IMR-90 (cell line): ENCODE measurements at regions of chr16 and their contacts with region 1.

Region 1: DNA sequence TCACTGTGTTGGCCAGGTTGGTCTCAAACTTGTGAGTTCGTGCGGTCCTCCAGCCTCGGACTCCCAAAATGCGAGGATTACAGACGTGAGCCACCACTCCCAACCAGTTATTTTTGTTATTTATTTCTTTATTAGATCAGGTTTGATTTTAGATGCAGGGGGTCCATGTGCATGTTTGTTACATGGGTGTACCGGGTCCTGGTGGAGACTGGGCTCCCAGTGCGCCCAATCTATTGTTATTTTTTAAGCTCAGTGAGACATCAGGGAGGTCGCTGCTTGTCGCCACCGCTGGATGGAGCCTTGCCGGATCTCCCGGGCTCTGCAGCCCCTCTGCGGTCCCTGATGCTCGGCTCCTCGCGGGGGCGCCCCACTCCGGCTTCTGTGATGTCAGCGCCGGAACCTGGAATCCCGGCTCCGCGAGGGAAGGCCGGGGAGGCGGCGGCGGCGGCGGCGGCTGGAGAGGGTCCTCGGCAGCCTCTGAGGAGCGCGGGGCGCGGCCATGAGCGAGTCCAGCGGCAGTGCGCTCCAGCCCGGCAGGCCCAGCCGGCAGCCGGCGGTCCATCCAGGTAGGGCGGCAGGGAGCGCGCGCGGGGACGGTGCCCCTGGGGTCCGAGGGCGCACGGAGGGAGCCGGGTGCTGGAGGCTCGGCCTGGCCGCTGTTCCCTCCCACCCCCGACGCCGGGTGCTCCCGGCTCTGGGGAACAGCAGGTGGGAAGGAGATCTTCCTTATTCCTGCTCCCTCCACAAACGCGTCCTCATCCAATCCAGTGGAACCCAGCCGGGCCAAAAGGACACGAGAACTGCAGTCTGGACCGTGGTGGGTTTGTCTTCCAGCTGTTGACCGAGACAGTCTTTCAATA is at the start of gene TMC7:
- DNase-seq: peak; percentile 79
- ATAC-seq: peak; percentile 99
- H3K4me3 ChIP-seq: peak within 1 kb of the TSS; percentile 66
- H3K27ac ChIP-seq: no peak within 1 kb of the TSS; the same call in 1 of the 2 replicates
- H3K4me1 ChIP-seq: peaks cover 2% of the 10 kb centered on the region; the same call in 1 of the 2 replicates
- H3K27me3 ChIP-seq: no peaks in the 10 kb centered on the region; the same call in 1 of the 2 replicates
- CTCF ChIP-seq: peak; percentile 97
- POLR2A ChIP-seq: 0 out of 2 replicates have a peak, but pooled peaks have one; percentile 29
- RAD21 ChIP-seq: peak; percentile 82
- total RNA-seq, gene TMC7: 0.28 and 0.36 TPM in 2 replicates

Region 2: GRCh38 chr16:18853694-18854093 is 130.1 kb before region 1 on chr16:
- CTCF ChIA-PET with region 1: no interaction called
- POLR2A ChIA-PET with region 1: interaction called, 14 read pairs
- dilution Hi-C with region 1: no loop called
- in situ Hi-C with region 1: no loop called
- intact Hi-C with region 1: no loop called
- DNase-seq: no peak
- ATAC-seq: no peak
- H3K4me3 ChIP-seq: no peak overlapping the region
- H3K27ac ChIP-seq: no peak overlapping the region
- H3K4me1 ChIP-seq: no peaks in the 10 kb centered on the region
- H3K27me3 ChIP-seq: no peaks in the 10 kb centered on the region
- CTCF ChIP-seq: no peak
- POLR2A ChIP-seq: no peak
- RAD21 ChIP-seq: no peak

Region 3: DNA sequence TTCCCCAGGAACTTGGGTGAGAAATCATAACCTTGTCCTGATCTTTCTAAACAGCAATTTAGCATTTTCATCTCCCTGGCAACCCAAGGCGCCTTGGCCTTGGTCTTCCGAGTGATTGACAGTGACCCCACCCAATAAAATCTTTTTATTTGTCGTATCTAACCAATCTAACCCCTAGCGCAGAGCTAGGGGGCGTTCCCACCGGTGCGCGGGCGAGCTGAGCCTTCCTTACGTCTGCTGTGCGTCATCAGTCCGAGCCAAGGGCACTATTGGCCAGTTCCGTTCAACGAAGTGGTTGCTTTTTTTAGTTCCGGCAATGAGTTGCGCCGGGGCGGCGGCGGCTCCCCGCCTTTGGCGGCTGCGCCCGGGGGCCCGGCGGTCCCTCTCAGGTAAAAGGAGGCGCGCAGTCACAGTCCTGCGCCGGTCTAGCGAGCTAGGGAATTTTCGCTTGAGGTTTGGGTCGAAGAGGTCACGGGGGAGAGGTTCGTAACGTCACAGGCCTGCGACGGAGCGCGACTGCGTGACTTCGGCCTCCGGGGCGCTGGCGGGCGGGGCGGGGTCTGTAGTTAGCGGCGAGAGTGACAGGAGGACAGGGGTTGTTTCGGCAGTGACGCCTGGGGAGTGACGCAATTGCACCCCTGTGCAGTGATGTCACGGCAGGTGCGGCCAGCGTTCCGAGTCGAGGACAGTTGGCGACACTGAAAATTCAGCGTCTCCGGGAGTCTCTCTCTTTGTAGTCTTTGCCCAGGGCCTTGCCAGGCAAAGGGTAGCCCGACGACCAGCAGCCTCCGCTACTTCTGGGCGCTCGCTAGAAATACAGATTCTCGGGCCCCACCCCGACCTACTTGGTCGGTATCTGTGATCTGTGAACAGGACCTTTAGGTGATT is 83.8 kb after region 1 on chr16 and contains the start of gene COQ7:
- CTCF ChIA-PET with region 1: interaction called, 5 read pairs
- POLR2A ChIA-PET with region 1: no interaction called
- dilution Hi-C with region 1: no loop called
- in situ Hi-C with region 1: loop called (anchors 5 kb)
- intact Hi-C with region 1: loop called (anchors 1 kb)
- DNase-seq: peak; percentile 100
- ATAC-seq: peak; percentile 98
- H3K4me3 ChIP-seq: peak within 1 kb of the TSS; percentile 64
- H3K27ac ChIP-seq: peak within 1 kb of the TSS; percentile 87
- H3K4me1 ChIP-seq: no peaks in the 10 kb centered on the region
- H3K27me3 ChIP-seq: no peaks in the 10 kb centered on the region
- CTCF ChIP-seq: no peak
- POLR2A ChIP-seq: peak; percentile 73; the same call in 1 of the 2 replicates
- RAD21 ChIP-seq: no peak
- total RNA-seq, gene COQ7: 10.9 and 15.0 TPM in 2 replicates

Region 4: GRCh38 chr16:19375561-19376158 is 391.9 kb after region 1 on chr16:
- CTCF ChIA-PET with region 1: interaction called, 4 read pairs
- POLR2A ChIA-PET with region 1: no interaction called
- dilution Hi-C with region 1: no loop called
- in situ Hi-C with region 1: loop called (anchors 10 kb)
- intact Hi-C with region 1: loop called (anchors 1 kb)
- DNase-seq: peak; percentile 56
- ATAC-seq: peak; percentile 96
- H3K4me3 ChIP-seq: no peak overlapping the region
- H3K27ac ChIP-seq: no peak overlapping the region
- H3K4me1 ChIP-seq: no peaks in the 10 kb centered on the region
- H3K27me3 ChIP-seq: peaks cover 4% of the 10 kb centered on the region
- CTCF ChIP-seq: peak; percentile 92
- POLR2A ChIP-seq: 0 out of 2 replicates have a peak, but pooled peaks have one; percentile 29
- RAD21 ChIP-seq: peak; percentile 96

Region 5: DNA sequence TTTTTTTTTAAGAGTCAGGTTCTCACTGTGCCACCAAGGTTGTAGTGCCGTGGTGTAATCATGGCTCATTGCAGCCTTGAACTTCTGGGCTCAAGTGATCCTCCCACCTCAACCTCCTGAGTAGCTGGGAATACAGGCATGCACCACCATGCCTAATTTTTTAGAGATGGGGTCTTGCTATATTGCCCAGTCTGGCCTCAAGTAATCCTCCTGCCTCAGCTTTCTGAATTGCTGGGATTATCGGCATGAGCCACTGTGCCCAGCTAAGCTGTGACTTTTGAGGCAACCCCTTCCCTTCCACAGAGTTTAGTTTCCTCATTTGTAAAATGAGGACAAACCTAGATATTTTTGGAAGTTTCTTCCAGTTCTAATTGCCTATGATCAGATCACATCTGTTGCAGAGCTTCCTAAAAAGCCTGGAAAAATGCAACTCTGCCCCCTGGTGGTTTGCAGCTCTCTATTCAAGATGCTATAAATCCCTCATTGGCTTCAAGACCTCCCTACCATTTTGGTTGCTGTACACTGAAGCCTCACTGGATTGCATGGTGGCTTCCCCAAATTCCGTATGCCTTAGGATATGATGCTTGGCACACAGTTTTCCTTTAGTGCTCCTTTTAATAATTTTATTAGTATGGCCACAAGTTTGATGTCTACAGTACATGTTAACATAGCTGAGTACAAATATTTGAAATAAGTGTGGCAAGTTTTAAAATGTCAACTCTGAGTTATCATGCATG is 518.8 kb after region 1 on chr16:
- CTCF ChIA-PET with region 1: interaction called, 5 read pairs
- POLR2A ChIA-PET with region 1: no interaction called
- dilution Hi-C with region 1: no loop called
- in situ Hi-C with region 1: no loop called
- intact Hi-C with region 1: loop called (anchors 5 kb)
- DNase-seq: peak; percentile 73
- ATAC-seq: peak; percentile 90
- H3K4me3 ChIP-seq: no peak overlapping the region
- H3K27ac ChIP-seq: no peak overlapping the region
- H3K4me1 ChIP-seq: no peaks in the 10 kb centered on the region
- H3K27me3 ChIP-seq: no peaks in the 10 kb centered on the region
- CTCF ChIP-seq: peak; percentile 69
- POLR2A ChIP-seq: no peak
- RAD21 ChIP-seq: peak; percentile 68